ENCODE measurements at regions of chr9 and their contacts with region 1.

Region 1: GRCh38 chr9:34458013-34458958 is at the starts of genes DNAI1 and FAM219A:
- DNase-seq: peak; percentile 99
- ATAC-seq: peak; percentile 98
- total RNA-seq, gene DNAI1: not detected
- total RNA-seq, gene FAM219A: 27.2 TPM

Region 2: DNA sequence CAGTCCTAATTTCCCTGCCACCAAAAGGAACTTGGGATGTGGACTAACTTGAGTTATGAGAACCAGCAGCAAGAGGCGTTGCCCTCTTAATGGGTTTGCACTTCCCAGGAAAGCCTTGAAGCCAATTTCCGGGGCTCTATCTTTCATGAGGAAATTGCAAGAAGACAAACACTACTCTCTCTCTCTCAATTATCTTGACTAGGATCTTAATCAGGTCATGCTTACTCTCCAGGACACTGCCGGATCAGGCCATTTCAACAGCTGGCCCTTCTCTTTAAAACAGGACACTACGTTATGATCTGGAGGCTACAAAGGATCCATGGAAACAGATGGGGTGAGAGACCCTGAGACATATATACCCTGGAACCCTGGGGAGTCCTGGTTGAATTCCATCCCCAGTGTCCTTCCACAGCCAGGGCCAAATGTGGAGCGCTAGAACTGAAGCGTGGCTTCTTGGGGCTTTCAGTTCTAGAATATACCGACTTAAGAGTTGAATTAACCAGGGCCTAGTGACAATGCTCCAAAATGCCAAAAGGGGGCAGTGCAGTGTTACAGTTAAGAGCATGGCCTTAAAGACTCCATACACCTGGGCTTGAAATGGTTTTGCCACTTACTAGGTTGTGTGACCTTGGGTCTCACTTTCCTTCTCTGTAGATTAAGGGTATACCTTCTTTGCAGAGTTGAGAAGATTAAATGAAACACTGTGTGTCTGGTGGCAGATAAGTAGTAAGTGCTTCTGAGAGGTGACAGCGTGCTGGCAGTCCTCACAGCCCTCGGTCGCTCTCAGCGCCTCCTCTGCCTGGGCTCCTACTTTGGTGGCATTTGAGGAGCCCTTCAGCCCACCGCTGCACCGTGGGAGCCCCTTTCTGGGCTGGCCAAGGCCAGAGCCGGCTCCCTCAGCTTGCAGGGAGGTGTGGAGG is 21.0 kb before region 1 on chr9:
- intact Hi-C with region 1: loop called (anchors 2 kb)
- DNase-seq: no peak
- ATAC-seq: peak; percentile 73

Region 3: GRCh38 chr9:34570376-34570775 is 112.1 kb after region 1 on chr9:
- intact Hi-C with region 1: no loop called
- DNase-seq: no peak
- ATAC-seq: peak; percentile 20